H1 (cell line): ENCODE measurements at regions of chr5 and their contacts with region 1.

Region 1: DNA sequence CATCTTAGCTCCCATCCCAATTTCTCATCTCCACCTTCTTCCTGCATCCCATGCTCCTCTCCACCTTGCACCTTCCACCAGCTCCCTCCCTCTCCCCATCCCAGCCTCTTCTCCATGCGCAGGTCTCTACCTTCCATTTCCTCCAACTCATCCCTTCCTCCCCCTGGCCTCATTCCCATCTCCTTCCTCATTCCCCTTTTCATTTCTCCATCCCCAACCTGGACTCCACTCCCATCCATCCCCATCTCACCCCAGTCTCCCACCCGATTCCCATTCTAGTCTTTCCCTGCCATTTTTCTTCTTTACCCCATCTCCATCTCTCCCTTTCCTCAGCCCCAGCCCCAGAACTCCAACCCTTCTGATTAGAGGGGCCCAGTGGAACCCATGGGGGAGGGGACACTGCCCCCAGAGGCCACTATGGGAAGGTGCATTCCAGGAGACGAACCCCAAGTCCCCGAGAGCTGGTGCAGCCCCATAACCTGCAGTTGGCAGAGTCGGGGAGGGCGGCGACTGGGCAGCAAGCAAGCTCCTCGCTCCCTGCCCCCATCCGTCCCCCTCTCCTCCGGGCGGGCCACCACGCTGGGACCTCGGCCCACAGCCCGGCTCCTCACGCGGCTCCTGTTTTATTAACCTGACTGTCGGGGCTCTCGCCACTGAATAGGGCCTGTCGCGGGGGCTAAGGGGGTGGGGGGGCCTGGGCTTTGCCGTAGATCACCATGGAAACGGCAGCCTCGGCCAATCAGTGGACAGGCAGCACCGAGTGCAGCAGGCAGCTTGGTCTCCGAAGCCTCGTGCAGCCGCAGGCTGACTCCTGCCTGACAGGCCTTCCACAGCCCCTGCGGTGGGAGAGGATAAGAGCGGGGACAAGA is 66.7 kb downstream of the PCDH1 start:
- DNase-seq: peak in 1 of 2 experiments; percentile 89
- H3K4me3 ChIP-seq: peak overlapping the region in 2 of 4 experiments; percentile 21 to 53; a peak in 5 of 8 replicates
- H3K27ac ChIP-seq: no peak overlapping the region
- H3K4me1 ChIP-seq: peaks cover 33 to 51% (median 34%) of the 10 kb centered on the region in 4 experiments
- H3K27me3 ChIP-seq: no peaks in the 10 kb centered on the region; a peak in 1 of 7 replicates
- CTCF ChIP-seq: peak in 2 of 3 experiments; percentile 80 to 91; a peak in 3 of 4 replicates
- EP300 ChIP-seq: peak in 1 of 2 experiments; percentile 52; a peak in 1 of 3 replicates
- POLR2A ChIP-seq: no peak
- RAD21 ChIP-seq: peak; percentile 66 to 74

Region 2: DNA sequence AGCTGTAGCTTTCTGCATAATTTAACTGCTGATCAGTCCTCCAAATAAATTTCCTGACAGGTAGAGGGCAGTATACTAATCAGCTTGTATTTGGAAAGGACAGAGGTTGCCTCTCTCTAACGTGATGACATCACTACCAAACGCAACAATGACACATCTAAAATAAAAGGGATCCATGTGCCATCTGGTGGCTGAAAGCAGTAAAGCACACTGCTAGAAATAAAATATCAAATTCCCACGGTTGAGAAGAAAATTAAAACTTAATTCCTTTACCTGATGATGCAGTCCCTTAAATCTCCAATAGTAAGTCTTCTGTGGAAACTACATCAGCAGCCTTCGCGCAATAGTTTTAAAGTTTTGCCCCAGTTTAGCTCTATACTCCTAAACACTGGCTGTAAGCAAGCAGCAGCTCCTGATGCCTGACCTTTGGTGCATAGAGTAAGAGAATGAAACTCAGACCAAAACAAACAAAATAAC is 247.3 kb before region 1 on chr5:
- CTCF ChIA-PET with region 1: no interaction called
- POLR2A ChIA-PET with region 1: no interaction called
- DNase-seq: peak; percentile 56 to 62
- H3K4me3 ChIP-seq: no peak overlapping the region
- H3K27ac ChIP-seq: peak overlapping the region; percentile 26; the same call in 1 of the 2 replicates
- H3K4me1 ChIP-seq: peaks cover 0 to 7% (median 3%) of the 10 kb centered on the region in 4 experiments; a peak in 4 of 7 replicates
- H3K27me3 ChIP-seq: no peaks in the 10 kb centered on the region
- CTCF ChIP-seq: peak in 2 of 3 experiments; percentile 96; a peak in 3 of 4 replicates
- EP300 ChIP-seq: peak in 1 of 2 experiments; percentile 89; a peak in 2 of 3 replicates
- POLR2A ChIP-seq: no peak
- RAD21 ChIP-seq: peak; percentile 55 to 65

Region 3: GRCh38 chr5:141734501-141735230 is 76.9 kb before region 1 on chr5:
- CTCF ChIA-PET with region 1: interaction called, 12 read pairs
- POLR2A ChIA-PET with region 1: no interaction called
- DNase-seq: peak in 1 of 2 experiments; percentile 87
- H3K4me3 ChIP-seq: no peak overlapping the region
- H3K27ac ChIP-seq: no peak overlapping the region
- H3K4me1 ChIP-seq: peaks cover 1 to 15% (median 7%) of the 10 kb centered on the region in 4 experiments; a peak in 5 of 7 replicates
- H3K27me3 ChIP-seq: no peaks in the 10 kb centered on the region
- CTCF ChIP-seq: no peak
- EP300 ChIP-seq: no peak
- POLR2A ChIP-seq: no peak
- RAD21 ChIP-seq: 0 out of 4 replicates have a peak, but pooled peaks have one; percentile 4 to 17

Region 4: DNA sequence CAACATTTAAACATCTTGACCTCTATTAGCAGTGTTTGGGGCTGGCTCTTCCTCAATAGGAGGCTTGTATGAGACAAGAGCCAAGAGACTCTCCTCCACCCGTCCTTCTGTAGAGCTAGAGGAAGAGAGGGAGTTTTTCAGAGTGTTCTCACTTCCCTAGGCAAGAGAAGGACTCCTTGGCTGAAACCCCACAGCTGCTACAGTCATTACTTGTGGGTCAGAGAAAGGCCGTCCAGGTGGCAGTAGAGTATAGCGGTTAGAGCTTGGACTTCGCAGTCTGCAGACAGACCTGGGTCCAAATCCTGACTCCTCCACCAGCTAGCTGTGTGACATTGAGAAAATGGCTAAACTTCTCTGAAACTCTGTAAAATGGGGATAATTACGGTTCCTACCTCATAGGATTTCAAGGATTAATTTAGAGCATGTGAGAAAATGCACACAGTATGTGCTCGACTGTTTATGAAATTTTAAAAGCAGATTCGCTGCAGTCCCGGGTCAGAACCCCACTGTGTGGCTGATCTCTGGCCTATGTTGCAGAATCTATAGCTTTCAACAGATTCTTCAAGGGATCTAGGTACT is 48.6 kb before region 1 on chr5:
- CTCF ChIA-PET with region 1: interaction called, 179 read pairs
- POLR2A ChIA-PET with region 1: interaction called, 9 read pairs
- DNase-seq: no peak
- H3K4me3 ChIP-seq: no peak overlapping the region
- H3K27ac ChIP-seq: no peak overlapping the region
- H3K4me1 ChIP-seq: peaks cover 10 to 24% (median 21%) of the 10 kb centered on the region in 4 experiments
- H3K27me3 ChIP-seq: no peaks in the 10 kb centered on the region; a peak in 1 of 7 replicates
- CTCF ChIP-seq: peak in 1 of 3 experiments; percentile 18; a peak in 1 of 4 replicates
- EP300 ChIP-seq: no peak
- POLR2A ChIP-seq: no peak
- RAD21 ChIP-seq: peak; percentile 37 to 58; a peak in 3 of 4 replicates

Region 5: GRCh38 chr5:141783005-141783941 is 28.2 kb before region 1 on chr5:
- CTCF ChIA-PET with region 1: interaction called, 210 read pairs
- POLR2A ChIA-PET with region 1: interaction called, 8 read pairs
- DNase-seq: no peak
- H3K4me3 ChIP-seq: no peak overlapping the region
- H3K27ac ChIP-seq: no peak overlapping the region
- H3K4me1 ChIP-seq: peaks cover 0 to 20% (median 7%) of the 10 kb centered on the region in 4 experiments; a peak in 6 of 7 replicates
- H3K27me3 ChIP-seq: no peaks in the 10 kb centered on the region
- CTCF ChIP-seq: no peak
- EP300 ChIP-seq: no peak
- POLR2A ChIP-seq: no peak
- RAD21 ChIP-seq: no peak

Region 6: GRCh38 chr5:141835928-141836670 is 24.6 kb after region 1 on chr5:
- CTCF ChIA-PET with region 1: interaction called, 232 read pairs
- POLR2A ChIA-PET with region 1: interaction called, 121 read pairs
- DNase-seq: no peak
- H3K4me3 ChIP-seq: no peak overlapping the region
- H3K27ac ChIP-seq: 0 out of 2 replicates have a peak overlapping the region, but pooled peaks have one; percentile 14
- H3K4me1 ChIP-seq: peaks cover 31 to 46% (median 43%) of the 10 kb centered on the region in 4 experiments
- H3K27me3 ChIP-seq: no peaks in the 10 kb centered on the region
- CTCF ChIP-seq: no peak
- EP300 ChIP-seq: no peak
- POLR2A ChIP-seq: no peak
- RAD21 ChIP-seq: no peak

Region 7: DNA sequence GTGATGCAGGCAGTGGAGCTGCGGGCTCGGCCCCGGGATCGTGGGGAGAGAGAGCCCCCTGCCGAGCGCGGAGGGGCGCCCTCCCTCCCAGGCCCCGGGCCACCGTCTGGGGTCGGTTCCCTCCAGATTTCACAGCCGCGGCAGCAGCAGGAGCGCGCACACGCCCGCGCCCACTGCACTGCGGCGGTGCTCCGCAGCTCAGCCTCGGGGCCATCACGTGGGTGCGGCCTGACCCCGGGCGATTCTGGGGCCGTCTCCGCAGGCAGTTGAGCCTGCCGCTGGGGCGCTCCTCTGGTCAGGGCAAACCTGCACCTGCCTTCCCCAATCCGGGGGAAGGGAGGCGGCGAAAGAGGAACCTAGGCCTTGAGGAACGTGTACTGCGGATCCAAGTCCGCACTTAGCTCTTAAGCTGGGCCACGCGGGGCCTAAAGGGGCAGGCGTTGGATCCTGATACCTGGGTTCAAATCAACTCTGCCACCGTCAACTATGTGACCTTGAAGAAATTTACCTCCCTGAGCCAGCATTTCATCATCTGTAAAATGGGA is 102.8 kb after region 1 on chr5:
- CTCF ChIA-PET with region 1: interaction called, 13 read pairs
- POLR2A ChIA-PET with region 1: interaction called, 3 read pairs
- DNase-seq: peak in 1 of 2 experiments; percentile 77
- H3K4me3 ChIP-seq: peak overlapping the region; percentile 5 to 64 (median 47)
- H3K27ac ChIP-seq: no peak overlapping the region
- H3K4me1 ChIP-seq: peaks cover 4 to 10% (median 6%) of the 10 kb centered on the region in 4 experiments; a peak in 6 of 7 replicates
- H3K27me3 ChIP-seq: peaks cover 3 to 17% (median 7%) of the 10 kb centered on the region in 4 experiments
- CTCF ChIP-seq: peak in 2 of 3 experiments; percentile 12 to 13; a peak in 3 of 4 replicates
- EP300 ChIP-seq: 0 out of 3 replicates have a peak, but pooled peaks of 1 of the 2 experiments have one; percentile 21
- POLR2A ChIP-seq: peak in 1 of 2 experiments; percentile 50; a peak in 1 of 3 replicates
- RAD21 ChIP-seq: peak; percentile 36 to 45; a peak in 3 of 4 replicates

Region 8: GRCh38 chr5:142063878-142064331 is 252.4 kb after region 1 on chr5:
- CTCF ChIA-PET with region 1: no interaction called
- POLR2A ChIA-PET with region 1: no interaction called
- DNase-seq: peak in 1 of 2 experiments; percentile 72
- H3K4me3 ChIP-seq: peak overlapping the region in 3 of 4 experiments; percentile 18 to 47 (median 30); a peak in 5 of 8 replicates
- H3K27ac ChIP-seq: no peak overlapping the region
- H3K4me1 ChIP-seq: peaks cover 0 to 3% (median 3%) of the 10 kb centered on the region in 4 experiments; a peak in 5 of 7 replicates
- H3K27me3 ChIP-seq: no peaks in the 10 kb centered on the region
- CTCF ChIP-seq: no peak
- EP300 ChIP-seq: no peak
- POLR2A ChIP-seq: no peak
- RAD21 ChIP-seq: no peak